GM10248 (cell line): ENCODE measurements at regions of chr3 and their contacts with region 1.

Region 1: DNA sequence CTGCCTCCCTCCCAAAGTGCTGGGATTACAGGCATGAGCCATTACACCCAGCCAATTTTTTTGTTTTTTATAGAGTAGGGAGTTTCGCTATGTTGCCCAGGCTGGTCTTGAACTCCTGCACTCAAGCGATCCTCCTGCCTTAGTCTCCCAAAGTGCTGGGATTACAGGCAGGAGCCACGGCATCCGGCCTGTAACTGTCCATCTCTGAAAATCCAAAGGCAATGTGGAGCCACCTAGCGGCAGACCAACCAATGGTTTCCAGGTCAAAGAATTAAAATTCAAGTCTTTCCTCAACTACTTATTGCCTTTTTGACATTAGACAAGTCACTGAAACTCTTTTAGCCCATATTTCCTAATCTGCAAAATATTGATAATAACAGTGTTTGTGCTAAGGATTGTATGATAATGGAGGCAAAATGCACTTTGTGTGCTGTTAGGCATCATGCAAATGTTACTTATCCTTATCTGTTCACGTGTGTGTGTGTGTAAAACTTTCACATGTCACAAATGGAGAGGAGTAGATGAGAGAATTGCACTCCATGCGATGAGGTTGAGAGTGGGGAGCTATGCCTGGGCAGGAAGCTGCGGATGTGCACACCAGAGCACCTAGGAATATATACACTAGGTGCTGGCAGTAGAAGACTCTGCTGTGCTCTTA is 48.7 kb downstream of the COL8A1 start:
- DNase-seq: peak; percentile 46
- CTCF ChIP-seq: peak; percentile 75

Region 2: GRCh38 chr3:99023590-99024192 is 663.4 kb before region 1 on chr3:
- CTCF ChIA-PET with region 1: interaction called, 18 read pairs
- POLR2A ChIA-PET with region 1: no interaction called
- DNase-seq: peak; percentile 25
- CTCF ChIP-seq: peak; percentile 61

Region 3: DNA sequence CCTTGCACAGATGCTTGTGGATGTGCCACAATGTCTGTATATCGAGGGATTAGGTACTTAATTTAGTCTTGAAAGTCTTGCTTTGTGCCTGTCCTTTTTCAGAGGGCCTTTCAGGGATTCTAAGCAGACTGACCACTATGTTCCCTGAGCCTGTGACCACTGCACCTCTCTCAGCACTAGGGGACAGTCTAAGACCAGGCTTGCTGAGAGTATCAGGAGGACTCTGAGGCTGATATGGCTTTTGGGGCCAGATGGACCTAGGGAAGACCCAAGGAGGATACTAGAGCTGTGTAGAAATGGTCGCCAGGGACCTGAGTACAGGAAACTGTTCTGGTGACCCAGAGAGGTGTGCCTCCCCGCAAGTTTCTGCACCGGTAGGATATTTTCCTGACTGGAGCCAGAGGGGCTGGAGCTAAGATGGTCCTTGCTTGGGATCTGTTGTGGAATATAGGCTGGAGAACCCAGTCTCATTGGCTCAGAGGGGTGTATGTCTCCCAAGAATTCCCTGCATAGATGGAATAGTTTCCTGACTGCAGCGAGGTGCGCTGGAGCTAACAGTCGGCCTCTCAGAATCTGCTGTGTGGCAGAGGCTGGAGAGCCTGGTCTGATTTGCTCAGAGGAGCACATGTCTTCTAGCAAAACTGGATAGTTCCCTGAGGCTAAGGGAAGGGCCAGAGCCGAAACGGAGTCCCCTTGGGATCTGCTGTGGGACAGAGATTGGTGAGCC is 572.4 kb before region 1 on chr3:
- CTCF ChIA-PET with region 1: interaction called, 20 read pairs
- POLR2A ChIA-PET with region 1: no interaction called
- DNase-seq: no peak
- CTCF ChIP-seq: peak; percentile 65

Region 4: DNA sequence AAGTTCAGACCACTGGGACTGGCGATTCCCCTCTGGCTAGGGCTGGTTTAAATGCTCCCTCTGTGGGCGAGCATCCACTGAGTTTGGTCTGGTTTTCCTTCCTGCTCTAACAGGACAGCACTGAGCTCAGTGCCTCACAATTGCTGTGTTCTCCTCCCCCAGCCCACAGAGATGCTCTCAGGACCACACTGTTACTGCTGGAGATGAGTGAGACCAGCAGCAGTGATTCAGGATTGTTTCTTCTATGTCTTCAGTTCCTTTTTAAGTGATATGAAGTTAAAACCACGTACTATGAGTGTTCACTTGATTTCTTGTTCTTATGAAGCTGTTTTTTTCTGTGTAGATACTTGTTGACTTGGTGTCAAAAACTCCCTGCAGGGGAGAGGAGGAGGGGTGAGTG is 229.1 kb before region 1 on chr3:
- CTCF ChIA-PET with region 1: no interaction called
- POLR2A ChIA-PET with region 1: no interaction called
- DNase-seq: no peak
- CTCF ChIP-seq: no peak

Region 5: DNA sequence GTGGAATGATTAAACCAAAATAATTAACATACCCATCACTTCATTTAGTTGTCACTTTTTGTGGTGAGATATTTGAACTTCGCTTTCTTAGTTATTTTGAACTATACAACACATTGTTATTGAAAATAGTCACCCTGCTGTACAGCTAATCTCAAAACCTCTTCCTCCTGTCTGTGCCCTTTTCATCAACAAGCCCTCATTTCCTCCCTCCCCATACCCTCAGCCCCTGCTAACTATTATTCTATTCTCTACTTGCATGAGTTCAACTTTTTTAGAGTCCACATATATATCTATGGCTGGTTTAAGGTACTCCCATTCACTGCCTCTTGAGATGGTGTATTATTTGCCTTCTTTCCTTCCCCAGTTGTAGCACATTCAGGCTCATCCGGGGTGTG is 16.5 kb before region 1 on chr3:
- CTCF ChIA-PET with region 1: interaction called, 15 read pairs
- POLR2A ChIA-PET with region 1: no interaction called
- DNase-seq: no peak
- CTCF ChIP-seq: no peak

Region 6: DNA sequence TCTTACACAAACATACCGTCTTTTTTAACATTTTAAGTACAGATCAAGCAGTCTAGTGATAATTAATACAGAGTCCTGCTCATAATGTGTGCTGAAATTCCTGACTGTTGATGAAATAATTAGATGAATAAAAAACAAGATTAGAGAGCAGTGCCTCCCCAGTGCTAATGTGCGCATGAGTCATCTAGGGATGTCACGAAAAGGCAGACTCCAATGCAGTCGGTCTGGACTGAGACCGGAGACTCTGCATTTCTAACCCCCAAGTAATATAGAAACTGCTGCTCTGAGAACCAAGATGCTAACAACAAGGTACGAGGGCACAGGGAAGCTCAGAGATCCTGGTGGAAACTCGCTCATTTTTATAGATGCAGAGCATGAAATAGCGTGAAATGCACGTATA is 12.8 kb after region 1 on chr3:
- CTCF ChIA-PET with region 1: interaction called, 11 read pairs
- POLR2A ChIA-PET with region 1: no interaction called
- DNase-seq: no peak
- CTCF ChIP-seq: no peak